GM10248 (cell line): ENCODE measurements at regions of chr5 and their contacts with region 1.

Region 1: DNA sequence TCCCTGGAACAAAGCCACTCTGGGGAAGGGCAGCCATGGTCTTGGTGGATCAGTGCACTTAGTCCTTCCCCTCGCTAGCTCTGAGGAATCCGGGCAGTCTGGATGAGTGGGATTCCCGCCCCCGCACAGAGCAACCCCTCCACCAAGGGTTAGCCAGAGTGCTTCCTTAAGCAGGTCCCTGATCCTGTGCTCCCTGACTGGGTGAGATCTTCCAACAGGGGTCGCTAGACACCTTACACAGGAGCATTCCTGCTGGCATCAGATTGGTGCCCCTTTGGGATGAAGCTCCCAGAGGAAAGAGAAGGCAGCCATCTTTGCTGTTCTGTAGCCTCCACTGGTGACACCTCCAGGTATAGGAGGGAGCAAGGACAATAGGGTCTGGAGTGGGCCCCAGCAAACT is 228.8 kb downstream of the AP3B1 start:
- DNase-seq: no peak
- CTCF ChIP-seq: peak; percentile 26

Region 2: GRCh38 chr5:78076351-78076750 is 10.7 kb after region 1 on chr5:
- CTCF ChIA-PET with region 1: interaction called, 11 read pairs
- POLR2A ChIA-PET with region 1: no interaction called
- DNase-seq: no peak
- CTCF ChIP-seq: no peak